ENCODE measurements at regions of chr11 and their contacts with region 1.

Region 1: GRCh38 chr11:123707606-123708205 is 33.8 kb downstream of the ZNF202 start:
- DNase-seq: peak; percentile 62
- CTCF ChIP-seq: peak; percentile 59

Region 2: DNA sequence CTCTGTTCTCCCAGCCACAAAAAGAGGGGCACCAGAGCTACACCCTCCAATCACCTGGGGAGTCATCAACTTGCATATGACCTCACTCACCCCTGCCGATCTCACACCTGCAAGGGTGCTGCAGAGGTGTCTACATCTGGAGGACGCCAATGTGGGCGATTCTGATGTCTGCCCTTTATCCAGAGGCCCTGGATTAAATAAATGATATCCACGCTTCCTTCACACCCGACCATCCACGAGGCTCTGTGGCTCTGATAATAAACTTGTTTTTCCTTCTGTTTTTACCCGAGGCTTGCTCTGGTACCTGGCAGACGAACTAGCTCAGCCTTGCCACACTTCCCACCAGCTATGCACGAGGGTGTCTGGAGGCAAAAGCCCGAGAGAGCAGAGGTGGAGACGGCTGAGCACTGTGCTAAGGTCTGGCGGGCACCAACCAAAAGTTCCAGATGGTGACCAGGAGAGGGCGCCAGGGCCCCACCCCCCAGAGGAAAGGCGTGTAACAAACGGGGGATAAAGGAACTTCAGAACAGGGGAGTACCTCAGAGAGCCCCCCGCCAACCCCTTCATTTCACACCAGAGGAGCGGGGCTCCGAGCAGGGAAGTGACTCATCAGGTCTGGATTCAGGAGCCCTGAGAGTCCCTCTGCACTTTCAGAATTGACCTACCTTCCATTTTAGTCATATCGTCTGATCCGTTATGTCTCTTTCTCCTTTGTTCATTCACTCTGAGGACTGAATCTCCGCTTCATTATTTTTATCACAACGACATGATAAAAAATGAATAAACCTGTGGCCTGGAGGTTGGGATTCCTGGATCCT is 66.8 kb before region 1 on chr11:
- in situ Hi-C with region 1: loop called (anchors 10 kb)
- DNase-seq: peak; percentile 78
- CTCF ChIP-seq: peak; percentile 80

Region 3: DNA sequence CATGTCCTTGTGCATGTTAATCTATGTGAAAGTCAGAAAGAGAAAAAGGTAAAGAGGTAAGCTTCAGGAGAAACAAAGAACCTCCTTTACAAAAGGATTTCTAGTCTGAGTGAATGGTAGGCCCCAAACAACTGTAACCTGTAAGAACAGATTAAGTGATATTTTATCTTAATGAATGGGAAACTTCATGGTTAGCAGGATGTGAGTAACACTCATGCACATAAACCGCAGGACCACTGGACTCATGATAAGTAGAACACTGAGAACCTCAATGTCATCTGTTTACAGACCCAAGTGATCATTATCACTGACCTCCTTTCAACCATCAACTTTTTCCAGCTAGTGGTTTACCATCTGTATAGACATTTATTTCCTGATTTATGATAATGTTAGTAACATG is 568.4 kb after region 1 on chr11:
- in situ Hi-C with region 1: no loop called
- DNase-seq: no peak
- CTCF ChIP-seq: no peak

Measured in GM13976 (cell line).